ENCODE measurements at regions of chr16 and their contacts with region 1.

Region 1: DNA sequence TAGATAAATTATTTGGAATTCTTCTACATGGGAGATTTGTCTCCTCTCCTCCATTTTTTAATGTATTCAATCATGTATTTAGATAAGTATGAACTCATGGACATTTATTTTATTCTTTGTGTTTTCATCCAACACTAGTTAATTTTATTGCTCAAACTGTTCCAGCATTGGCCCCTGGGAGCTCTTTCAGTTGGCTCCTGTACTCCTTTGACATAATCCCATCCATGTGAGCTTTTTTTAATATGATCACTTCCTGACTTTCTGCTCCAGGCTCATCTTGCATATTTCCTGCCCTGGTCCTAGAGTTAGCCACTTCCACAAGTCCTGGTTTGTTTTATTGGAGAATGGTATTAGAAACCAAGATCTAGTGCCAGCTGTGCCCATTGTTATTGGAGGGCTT is 419.0 kb upstream of the CDH11 start:
- DNase-seq: peak; percentile 10
- H3K4me3 ChIP-seq: no peak overlapping the region
- H3K27ac ChIP-seq: peak overlapping the region; percentile 96
- H3K4me1 ChIP-seq: peaks cover 46% of the 10 kb centered on the region
- H3K27me3 ChIP-seq: no peaks in the 10 kb centered on the region
- CTCF ChIP-seq: no peak

Region 2: DNA sequence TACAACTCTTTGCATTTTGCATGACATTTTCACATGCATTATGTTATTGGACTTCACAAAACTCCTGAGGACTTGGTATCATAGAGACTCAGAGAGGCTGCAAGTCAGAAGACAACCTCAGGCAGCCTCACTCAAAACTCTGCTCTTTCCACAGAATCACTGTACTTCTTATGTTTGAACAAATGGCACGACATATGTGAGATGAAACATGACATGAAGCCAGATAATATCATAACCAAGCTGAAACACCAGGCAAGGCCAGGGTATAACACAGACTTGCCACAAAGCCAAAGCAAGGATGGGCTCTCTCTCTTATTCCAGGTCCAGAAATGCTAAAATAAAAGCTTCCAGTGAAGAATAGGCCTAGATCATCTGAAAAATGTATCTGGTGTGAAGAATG is 399.8 kb after region 1 on chr16:
- CTCF ChIA-PET with region 1: no interaction called
- POLR2A ChIA-PET with region 1: no interaction called
- intact Hi-C with region 1: loop called (anchors 5 kb)
- DNase-seq: no peak
- H3K4me3 ChIP-seq: no peak overlapping the region
- H3K27ac ChIP-seq: no peak overlapping the region
- H3K4me1 ChIP-seq: no peaks in the 10 kb centered on the region
- H3K27me3 ChIP-seq: no peaks in the 10 kb centered on the region
- CTCF ChIP-seq: no peak

Measured in A673 (cell line).